Activated naive CD4-positive, alpha-beta T cell treated with anti-CD3 and anti-CD28 coated beads for 36 hours (primary cell): ENCODE measurements at regions of chr17 and their contacts with region 1.

Region 1: DNA sequence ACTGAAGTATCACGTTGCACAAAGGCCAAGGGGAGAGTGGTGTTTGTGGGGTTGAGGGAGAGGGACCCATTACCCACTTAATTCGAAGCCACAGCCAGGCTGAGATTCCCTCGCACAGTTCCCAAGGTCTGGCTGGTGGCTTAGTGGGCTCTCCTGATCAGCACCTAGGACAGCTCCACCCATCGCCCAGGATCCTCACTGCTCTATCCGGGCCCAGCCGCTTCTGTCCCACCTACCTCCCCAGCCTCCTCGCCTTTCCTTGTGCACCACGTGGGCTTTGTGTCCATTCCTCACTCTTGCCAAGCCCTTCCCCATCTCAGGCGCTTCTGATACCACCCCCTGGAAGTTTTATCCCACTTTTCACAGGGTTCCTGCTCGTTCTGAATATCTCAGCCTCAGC is 163.5 kb downstream of the CCT6B start:
- DNase-seq: peak; percentile 51
- H3K4me3 Mint-ChIP-seq: no peak overlapping the region
- H3K27ac Mint-ChIP-seq: no peak overlapping the region
- H3K4me1 Mint-ChIP-seq: no peaks in the 10 kb centered on the region
- H3K27me3 Mint-ChIP-seq: peaks cover 9% of the 10 kb centered on the region

Region 2: DNA sequence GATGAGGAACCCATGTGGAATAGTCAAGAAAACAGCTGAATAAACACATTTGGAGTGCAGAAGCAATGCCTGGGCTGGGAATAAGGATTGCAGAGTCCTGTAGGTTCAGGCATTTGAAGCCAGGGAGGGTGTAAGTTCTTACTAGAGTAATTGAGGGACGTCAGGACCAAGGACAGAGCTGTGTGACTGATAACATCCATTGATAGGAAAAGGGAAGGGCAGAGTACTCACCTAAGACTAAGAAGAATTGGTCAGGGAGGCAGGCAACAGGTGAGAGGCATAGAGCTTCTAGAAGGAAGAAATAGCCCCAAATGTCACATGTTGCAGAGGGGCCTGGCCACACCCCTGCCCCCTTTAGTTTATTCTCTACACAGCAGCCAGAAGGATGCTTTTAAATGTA is 298.1 kb before region 1 on chr17:
- CTCF ChIA-PET with region 1: no interaction called
- intact Hi-C with region 1: loop called (anchors 5 kb)
- DNase-seq: peak; percentile 48
- H3K4me3 Mint-ChIP-seq: no peak overlapping the region
- H3K27ac Mint-ChIP-seq: no peak overlapping the region
- H3K4me1 Mint-ChIP-seq: no peaks in the 10 kb centered on the region
- H3K27me3 Mint-ChIP-seq: peaks cover 12% of the 10 kb centered on the region

Region 3: DNA sequence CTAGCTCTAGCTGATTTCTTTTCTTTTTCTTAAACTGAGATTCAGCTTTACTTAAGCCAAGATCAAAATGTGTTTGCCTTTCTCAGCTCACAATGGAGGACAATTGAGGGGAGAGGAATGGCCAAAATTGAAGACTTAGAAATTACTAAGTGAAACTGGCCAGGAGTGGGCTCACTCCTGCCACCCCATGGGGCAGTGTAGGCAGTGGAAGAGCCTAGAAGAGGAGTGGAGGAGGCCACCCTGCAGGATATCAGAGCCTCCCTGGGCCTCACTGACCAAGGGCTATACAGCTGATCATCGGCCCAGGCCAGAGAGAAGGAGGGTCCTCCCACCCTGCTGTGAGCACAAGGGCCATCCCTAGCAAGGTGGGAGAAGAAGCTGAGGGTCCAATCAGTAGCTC is 43.7 kb after region 1 on chr17:
- CTCF ChIA-PET with region 1: no interaction called
- intact Hi-C with region 1: no loop called
- DNase-seq: no peak
- H3K4me3 Mint-ChIP-seq: no peak overlapping the region
- H3K27ac Mint-ChIP-seq: peak overlapping the region; percentile 39
- H3K4me1 Mint-ChIP-seq: peaks cover 19% of the 10 kb centered on the region
- H3K27me3 Mint-ChIP-seq: no peaks in the 10 kb centered on the region